Dendritic cell treated with granulocyte-macrophage colony-stimulating factor and Interleukin-4, amounts not matched to agents 40 ng/mL and 50 ng/mL, for 4 days (primary cell): ENCODE measurements at regions of chr15 and their contacts with region 1.

Region 1: GRCh38 chr15:70264014-70264582 is 166.4 kb upstream of the TLE3 start:
- H3K4me3 Mint-ChIP-seq: no peak overlapping the region
- H3K27ac Mint-ChIP-seq: peak overlapping the region; percentile 86
- H3K4me1 Mint-ChIP-seq: peaks cover 96% of the 10 kb centered on the region
- H3K27me3 Mint-ChIP-seq: peaks cover 51% of the 10 kb centered on the region

Region 2: GRCh38 chr15:69462493-69463181 is 801.5 kb before region 1 on chr15:
- intact Hi-C with region 1: loop called (anchors 10 kb)
- H3K4me3 Mint-ChIP-seq: peak overlapping the region; percentile 82
- H3K27ac Mint-ChIP-seq: peak overlapping the region; percentile 89
- H3K4me1 Mint-ChIP-seq: peaks cover 30% of the 10 kb centered on the region
- H3K27me3 Mint-ChIP-seq: no peaks in the 10 kb centered on the region

Region 3: DNA sequence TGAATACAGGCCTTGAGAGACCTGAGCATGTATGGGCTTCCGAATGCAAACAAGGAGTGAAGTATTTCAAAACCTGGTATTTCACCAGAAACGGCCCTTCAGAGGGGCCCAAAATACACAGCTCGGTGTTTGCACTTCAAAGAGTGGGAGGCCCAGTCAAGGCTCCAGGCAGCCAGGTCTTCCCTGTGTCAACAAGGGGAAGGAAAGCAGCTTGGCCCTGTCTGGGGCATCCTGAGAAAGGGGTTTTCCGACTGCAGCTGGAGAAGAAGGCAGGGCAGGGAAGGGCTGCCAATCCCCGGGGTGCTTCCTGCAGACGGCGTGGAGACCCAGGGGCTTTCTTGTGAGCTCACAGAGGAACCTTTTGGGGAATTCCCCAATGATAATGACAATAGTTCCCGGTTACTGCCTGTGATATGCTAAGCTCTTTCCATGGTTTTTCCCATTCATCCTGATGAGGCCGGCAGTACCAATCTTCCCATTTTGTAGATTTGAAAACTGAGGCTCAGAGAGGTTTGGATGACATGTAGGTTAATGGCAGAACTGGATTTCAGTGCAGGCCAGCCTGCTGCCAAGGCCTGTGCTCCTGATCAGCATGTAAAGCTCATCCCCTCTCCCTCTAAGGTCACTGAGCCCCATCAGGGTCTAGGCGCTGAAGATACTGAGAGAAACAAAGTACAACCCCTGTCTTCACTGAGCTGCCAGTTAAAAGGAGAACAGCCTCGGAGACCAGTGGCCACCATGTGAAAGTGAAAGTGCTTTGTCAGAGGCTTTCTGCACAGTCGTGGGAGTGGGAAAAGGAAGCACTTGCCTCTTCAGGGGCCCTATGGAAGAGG is 123.3 kb before region 1 on chr15:
- intact Hi-C with region 1: loop called (anchors 10 kb)
- H3K4me3 Mint-ChIP-seq: peak overlapping the region; percentile 48
- H3K27ac Mint-ChIP-seq: peak overlapping the region; percentile 56
- H3K4me1 Mint-ChIP-seq: peaks cover 60% of the 10 kb centered on the region
- H3K27me3 Mint-ChIP-seq: peaks cover 46% of the 10 kb centered on the region

Region 4: GRCh38 chr15:70327856-70328678 is 64.0 kb after region 1 on chr15:
- intact Hi-C with region 1: loop called (anchors 10 kb)
- H3K4me3 Mint-ChIP-seq: no peak overlapping the region
- H3K27ac Mint-ChIP-seq: no peak overlapping the region
- H3K4me1 Mint-ChIP-seq: peaks cover 33% of the 10 kb centered on the region
- H3K27me3 Mint-ChIP-seq: peaks cover 42% of the 10 kb centered on the region

Region 5: GRCh38 chr15:70466895-70467529 is 202.9 kb after region 1 on chr15:
- intact Hi-C with region 1: loop called (anchors 10 kb)
- H3K4me3 Mint-ChIP-seq: no peak overlapping the region
- H3K27ac Mint-ChIP-seq: peak overlapping the region; percentile 7
- H3K4me1 Mint-ChIP-seq: peaks cover 43% of the 10 kb centered on the region
- H3K27me3 Mint-ChIP-seq: peaks cover 53% of the 10 kb centered on the region

Region 6: DNA sequence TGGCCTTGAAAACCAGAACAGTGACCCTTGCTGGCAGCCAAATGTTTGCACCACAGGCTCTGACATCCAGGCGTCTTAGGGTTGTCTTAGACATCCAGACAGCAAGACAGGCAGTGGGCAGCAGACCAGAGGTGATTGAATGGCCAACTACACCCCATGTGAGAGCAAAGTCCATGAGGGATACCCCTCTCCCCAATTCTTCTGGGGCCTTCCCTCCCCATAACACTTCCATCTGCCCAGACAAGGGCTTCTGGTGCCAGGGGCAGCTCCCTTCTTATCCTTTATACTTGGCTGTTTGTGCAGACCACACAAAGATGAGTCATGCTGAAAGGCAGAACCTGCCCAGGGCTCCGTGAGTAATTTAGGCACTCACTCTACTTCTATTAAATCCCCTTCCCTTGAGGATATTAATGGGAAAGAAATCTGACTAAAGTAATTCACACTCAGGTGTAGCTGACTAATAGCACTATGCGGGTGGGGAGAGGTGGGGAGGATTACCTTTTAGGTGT is 241.4 kb after region 1 on chr15:
- intact Hi-C with region 1: loop called (anchors 5 kb)
- H3K4me3 Mint-ChIP-seq: no peak overlapping the region
- H3K27ac Mint-ChIP-seq: peak overlapping the region; percentile 95
- H3K4me1 Mint-ChIP-seq: peaks cover 91% of the 10 kb centered on the region
- H3K27me3 Mint-ChIP-seq: peaks cover 25% of the 10 kb centered on the region